ENCODE measurements at regions of chr5 and their contacts with region 1.

Region 1: GRCh38 chr5:611721-612486 is at the start of gene CEP72:
- DNase-seq: peak; percentile 97
- H3K4me3 Mint-ChIP-seq: peak within 1 kb of the TSS; percentile 87
- H3K27ac Mint-ChIP-seq: peak within 1 kb of the TSS; percentile 88
- H3K4me1 Mint-ChIP-seq: peaks cover 48% of the 10 kb centered on the region
- H3K27me3 Mint-ChIP-seq: peaks cover 4% of the 10 kb centered on the region
- total RNA-seq, gene CEP72: 33.2 and 36.0 TPM in 2 replicates

Region 2: DNA sequence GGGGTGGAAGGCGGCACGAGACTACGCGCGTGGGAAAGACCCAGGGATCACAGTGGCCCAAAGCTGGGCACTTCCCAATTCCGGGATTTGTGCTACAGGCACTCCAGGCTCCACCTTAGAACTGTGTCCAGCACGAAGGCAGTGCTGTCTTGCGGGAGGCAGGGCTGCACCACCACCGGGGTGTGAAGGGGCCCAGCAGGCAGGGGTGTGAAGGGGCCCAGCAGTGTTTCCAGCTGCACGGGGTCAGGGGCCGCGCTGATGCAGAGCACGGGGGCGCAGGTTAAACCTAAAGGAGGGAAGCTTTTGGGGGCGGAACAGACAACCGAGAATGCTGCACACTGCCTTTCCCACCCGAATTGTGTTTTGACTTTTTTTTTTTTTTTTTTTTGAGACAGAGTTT is 341.6 kb before region 1 on chr5:
- intact Hi-C with region 1: loop called (anchors 5 kb)
- DNase-seq: no peak
- H3K4me3 Mint-ChIP-seq: peak overlapping the region; percentile 86
- H3K27ac Mint-ChIP-seq: peak overlapping the region; percentile 78
- H3K4me1 Mint-ChIP-seq: peaks cover 35% of the 10 kb centered on the region
- H3K27me3 Mint-ChIP-seq: no peaks in the 10 kb centered on the region

Region 3: DNA sequence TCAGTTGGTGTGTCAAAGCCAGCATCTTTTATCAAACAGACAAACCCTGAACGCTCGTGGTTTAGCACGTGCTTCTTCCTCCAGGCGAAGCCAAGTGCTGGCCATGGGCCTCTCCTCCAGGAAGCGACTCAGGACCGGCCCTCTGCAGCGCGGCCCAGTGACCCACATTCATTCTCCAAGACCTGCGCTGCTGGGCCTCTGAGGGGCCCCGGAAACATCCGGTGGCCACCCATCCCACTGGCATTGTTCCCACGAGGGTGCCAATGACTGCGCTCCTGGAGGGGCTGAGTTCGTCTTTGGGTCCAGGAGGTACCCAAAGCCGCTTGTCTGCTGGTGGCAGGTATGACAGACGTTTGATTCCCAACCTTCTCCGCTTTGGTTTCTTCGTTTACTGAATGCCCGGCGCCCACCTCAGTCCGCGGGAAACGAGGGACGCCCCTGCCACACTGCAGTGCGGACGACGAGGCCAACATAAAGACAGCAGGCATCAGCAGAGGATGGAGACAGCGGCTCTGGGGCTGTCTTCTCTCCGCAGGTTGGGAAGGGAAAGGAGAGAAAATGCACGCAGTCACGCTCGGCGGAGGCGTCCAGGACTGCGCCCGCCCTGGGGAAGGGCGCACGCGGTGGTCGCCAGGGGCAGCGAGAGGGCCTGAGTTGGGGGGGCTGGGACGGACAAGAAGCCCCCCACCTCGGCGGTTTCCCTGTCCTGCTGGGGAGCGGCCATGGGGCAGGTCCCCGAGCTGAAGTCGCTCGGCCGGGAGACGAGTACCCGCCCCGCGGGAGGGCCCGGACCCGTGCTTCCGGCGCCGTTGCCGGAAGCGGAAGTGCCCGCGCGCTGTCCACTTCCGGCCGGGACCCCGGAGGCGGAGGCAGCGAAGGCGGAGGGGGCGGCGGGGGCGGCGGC is 169.3 kb before region 1 on chr5 and contains the start of gene EXOC3:
- intact Hi-C with region 1: loop called (anchors 2 kb)
- DNase-seq: peak; percentile 95
- H3K4me3 Mint-ChIP-seq: peak within 1 kb of the TSS; percentile 98
- H3K27ac Mint-ChIP-seq: peak within 1 kb of the TSS; percentile 98
- H3K4me1 Mint-ChIP-seq: peaks cover 30% of the 10 kb centered on the region
- H3K27me3 Mint-ChIP-seq: no peaks in the 10 kb centered on the region
- total RNA-seq, gene EXOC3: 64.5 and 67.2 TPM in 2 replicates

Region 4: DNA sequence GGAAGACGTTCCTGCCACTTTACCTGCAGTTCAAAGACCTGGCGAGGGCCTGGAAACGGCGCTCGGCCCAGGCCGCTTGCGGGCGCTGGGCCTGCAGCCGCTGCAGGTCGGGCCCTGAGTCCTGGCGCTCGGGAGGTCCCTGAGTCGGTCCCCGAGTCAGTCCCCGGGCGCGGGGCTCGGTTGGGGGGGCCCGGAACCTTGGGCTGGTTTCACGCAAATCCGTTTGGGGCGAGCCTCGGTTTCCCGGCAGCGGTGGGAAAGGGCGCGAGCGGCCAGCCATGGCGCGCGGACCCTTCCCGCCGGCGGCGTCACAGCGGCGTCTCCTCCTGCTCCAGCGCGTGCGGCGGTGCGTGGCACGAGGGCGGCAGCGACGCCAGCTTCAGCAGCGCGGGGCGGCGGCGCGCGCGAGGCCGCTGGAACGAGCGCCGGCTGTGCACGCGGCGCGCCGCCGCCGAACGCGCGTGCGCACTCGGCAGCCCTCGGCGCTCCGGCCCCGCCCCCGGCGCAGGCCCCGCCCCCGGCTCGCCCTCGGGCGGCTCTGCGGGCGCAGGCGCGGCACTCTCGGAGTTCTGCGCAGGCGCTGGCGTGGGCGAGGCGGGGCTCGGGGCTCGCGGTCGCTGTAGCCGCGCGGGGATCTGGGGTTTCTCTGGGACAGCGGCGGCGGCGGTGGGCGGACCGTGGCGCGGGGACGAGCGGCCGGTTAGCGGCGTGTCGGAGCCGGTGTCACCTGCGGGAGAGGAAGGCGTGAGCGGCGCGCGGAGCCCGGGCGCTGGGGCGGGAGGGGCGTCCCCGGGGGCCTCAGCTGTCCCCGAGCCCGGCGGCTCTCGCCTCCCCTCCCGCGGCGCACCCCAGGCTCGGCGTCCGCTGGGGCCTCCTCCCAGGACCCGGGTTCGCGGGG is 139.0 kb before region 1 on chr5:
- intact Hi-C with region 1: loop called (anchors 2 kb)
- DNase-seq: peak; percentile 96
- H3K4me3 Mint-ChIP-seq: peak overlapping the region; percentile 90
- H3K27ac Mint-ChIP-seq: peak overlapping the region; percentile 85
- H3K4me1 Mint-ChIP-seq: peaks cover 17% of the 10 kb centered on the region
- H3K27me3 Mint-ChIP-seq: peaks cover 10% of the 10 kb centered on the region

Region 5: DNA sequence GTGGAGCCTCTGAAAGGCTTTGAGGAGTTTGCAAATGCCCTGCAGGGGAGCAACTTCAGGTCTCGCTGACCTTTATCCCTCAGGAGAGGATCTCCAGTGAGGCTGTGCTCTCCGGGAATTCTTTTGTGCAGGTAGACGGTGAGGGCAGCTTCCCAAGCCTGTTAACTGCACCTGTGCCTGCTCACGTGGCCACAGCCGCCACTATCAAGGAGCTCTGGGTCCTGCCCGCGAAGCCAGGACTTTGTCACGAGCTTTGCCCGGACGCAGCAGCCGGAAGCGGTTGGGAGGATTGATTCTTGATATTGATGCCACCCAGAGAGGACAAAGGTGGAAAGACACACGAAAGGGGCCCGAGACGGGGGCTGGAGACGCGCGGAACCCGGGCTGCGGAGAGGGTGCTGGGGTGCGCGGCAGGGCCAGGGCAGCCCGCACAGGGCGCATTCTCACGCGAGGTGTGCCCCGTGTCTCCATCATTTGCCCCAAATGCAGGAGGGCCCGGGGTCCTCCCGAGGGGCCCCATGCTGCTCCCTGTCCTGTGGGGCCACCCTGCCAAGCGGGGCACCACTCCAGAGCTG is 105.9 kb before region 1 on chr5:
- intact Hi-C with region 1: no loop called
- DNase-seq: no peak
- H3K4me3 Mint-ChIP-seq: no peak overlapping the region
- H3K27ac Mint-ChIP-seq: no peak overlapping the region
- H3K4me1 Mint-ChIP-seq: no peaks in the 10 kb centered on the region
- H3K27me3 Mint-ChIP-seq: peaks cover 9% of the 10 kb centered on the region

Region 6: GRCh38 chr5:528625-529511 is 83.0 kb before region 1 on chr5:
- intact Hi-C with region 1: loop called (anchors 5 kb)
- DNase-seq: peak; percentile 68
- H3K4me3 Mint-ChIP-seq: peak overlapping the region; percentile 30
- H3K27ac Mint-ChIP-seq: peak overlapping the region; percentile 49
- H3K4me1 Mint-ChIP-seq: peaks cover 25% of the 10 kb centered on the region
- H3K27me3 Mint-ChIP-seq: peaks cover 50% of the 10 kb centered on the region

Region 7: GRCh38 chr5:553887-554286 is 58.0 kb before region 1 on chr5:
- intact Hi-C with region 1: no loop called
- DNase-seq: no peak
- H3K4me3 Mint-ChIP-seq: no peak overlapping the region
- H3K27ac Mint-ChIP-seq: no peak overlapping the region
- H3K4me1 Mint-ChIP-seq: no peaks in the 10 kb centered on the region
- H3K27me3 Mint-ChIP-seq: peaks cover 16% of the 10 kb centered on the region

Region 8: GRCh38 chr5:572398-573019 is 39.4 kb before region 1 on chr5:
- intact Hi-C with region 1: no loop called
- DNase-seq: no peak
- H3K4me3 Mint-ChIP-seq: no peak overlapping the region
- H3K27ac Mint-ChIP-seq: no peak overlapping the region
- H3K4me1 Mint-ChIP-seq: no peaks in the 10 kb centered on the region
- H3K27me3 Mint-ChIP-seq: peaks cover 13% of the 10 kb centered on the region

Region 9: GRCh38 chr5:691817-692528 is 80.1 kb after region 1 on chr5:
- intact Hi-C with region 1: loop called (anchors 5 kb)
- DNase-seq: no peak
- H3K4me3 Mint-ChIP-seq: peak overlapping the region; percentile 59
- H3K27ac Mint-ChIP-seq: no peak overlapping the region
- H3K4me1 Mint-ChIP-seq: no peaks in the 10 kb centered on the region
- H3K27me3 Mint-ChIP-seq: peaks cover 6% of the 10 kb centered on the region

Region 10: GRCh38 chr5:746258-746761 is 134.4 kb after region 1 on chr5:
- intact Hi-C with region 1: no loop called
- DNase-seq: no peak
- H3K4me3 Mint-ChIP-seq: no peak overlapping the region
- H3K27ac Mint-ChIP-seq: no peak overlapping the region
- H3K4me1 Mint-ChIP-seq: no peaks in the 10 kb centered on the region
- H3K27me3 Mint-ChIP-seq: peaks cover 1% of the 10 kb centered on the region

Measured in activated CD4-positive, alpha-beta T cell treated with anti-CD3 and anti-CD28 coated beads, Interleukin-2, amount 10 ng/mL, durations not matched to agents 24 days and 14 days (primary cell).